Heart right ventricle (tissue), 16 donors: ENCODE measurements at regions of chr3 and their contacts with region 1.

Region 1: DNA sequence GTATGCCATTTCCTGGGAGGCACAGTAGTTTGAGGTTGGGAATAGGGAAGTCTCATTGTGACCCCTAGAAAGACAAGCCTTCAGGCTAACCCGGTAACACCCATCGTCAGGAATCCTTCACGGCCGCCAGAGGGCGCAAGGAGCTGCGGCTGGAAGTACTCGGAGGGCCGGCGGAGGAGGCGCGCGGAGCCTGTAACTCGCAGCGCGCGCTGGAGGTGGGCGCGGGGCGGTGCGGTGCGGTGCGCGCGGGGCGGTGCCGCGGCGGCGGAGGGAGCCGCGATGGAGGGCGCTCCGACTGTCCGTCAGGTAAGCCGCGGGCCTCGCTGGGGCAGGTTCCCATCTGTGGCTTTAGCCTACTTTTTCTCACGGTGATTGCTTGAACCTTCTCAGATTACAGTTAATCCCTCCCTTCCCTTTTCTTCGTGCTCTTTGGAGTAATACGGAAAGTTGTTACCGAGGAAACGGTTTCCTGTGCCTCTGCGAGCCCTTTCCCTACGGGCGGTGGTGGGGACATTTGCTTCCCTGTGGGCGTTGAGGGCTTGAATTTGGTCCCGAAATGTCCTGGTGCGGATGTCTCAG is at the start of gene GRAMD1C:
- DNase-seq: peak; percentile 82 to 86
- ATAC-seq: peak; percentile 91 to 99 (median 98)
- H3K4me3 ChIP-seq: peak within 1 kb of the TSS; percentile 14 to 79 (median 60)
- H3K27ac ChIP-seq: peak within 1 kb of the TSS in 6 of 10 donors; percentile 43 to 71 (median 58)
- H3K4me1 ChIP-seq: peaks cover 0 to 9% (median 2%) of the 10 kb centered on the region in 9 donors
- H3K27me3 ChIP-seq: no peaks in the 10 kb centered on the region
- CTCF ChIP-seq: peak; percentile 72 to 91 (median 84)
- total RNA-seq, gene GRAMD1C: 0.37 to 4.7 (median 1.2) TPM

Region 2: DNA sequence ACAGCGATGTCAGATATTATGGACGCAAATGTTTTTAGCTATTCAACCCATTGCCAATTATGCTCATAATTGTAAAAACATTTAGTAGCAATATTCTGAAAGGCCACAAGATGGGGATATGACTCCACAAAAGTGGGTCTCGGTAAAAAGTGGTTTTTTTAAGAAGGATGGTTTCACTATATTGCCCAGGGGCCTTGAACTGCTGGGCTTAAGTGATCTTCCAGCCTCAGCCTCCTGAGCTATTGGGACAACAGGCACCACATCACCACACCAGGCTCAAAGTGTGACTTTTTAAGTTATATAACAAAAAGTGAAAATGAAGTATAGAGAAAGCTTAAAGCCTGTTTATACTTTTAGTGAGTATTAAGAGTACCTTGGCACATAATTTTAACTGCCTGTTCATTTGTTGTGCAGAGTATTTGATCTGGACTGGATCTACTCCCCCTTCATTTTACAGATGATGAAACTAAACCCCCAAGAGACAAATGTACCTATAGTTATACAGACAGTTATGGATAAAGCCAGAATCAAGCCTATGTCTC is 102.1 kb before region 1 on chr3:
- intact Hi-C with region 1: loop called in 5 of 10 experiments (anchors 2 to 10 kb)
- DNase-seq: peak in 1 of 2 donors; percentile 26
- ATAC-seq: peak in 7 of 8 donors; percentile 55 to 83 (median 74)
- H3K4me3 ChIP-seq: no peak overlapping the region
- H3K27ac ChIP-seq: peak overlapping the region in 2 of 10 donors; percentile 0 to 6
- H3K4me1 ChIP-seq: peaks cover 0 to 43% (median 36%) of the 10 kb centered on the region in 9 donors
- H3K27me3 ChIP-seq: no peaks in the 10 kb centered on the region
- CTCF ChIP-seq: peak; percentile 52 to 80 (median 73)

Region 3: DNA sequence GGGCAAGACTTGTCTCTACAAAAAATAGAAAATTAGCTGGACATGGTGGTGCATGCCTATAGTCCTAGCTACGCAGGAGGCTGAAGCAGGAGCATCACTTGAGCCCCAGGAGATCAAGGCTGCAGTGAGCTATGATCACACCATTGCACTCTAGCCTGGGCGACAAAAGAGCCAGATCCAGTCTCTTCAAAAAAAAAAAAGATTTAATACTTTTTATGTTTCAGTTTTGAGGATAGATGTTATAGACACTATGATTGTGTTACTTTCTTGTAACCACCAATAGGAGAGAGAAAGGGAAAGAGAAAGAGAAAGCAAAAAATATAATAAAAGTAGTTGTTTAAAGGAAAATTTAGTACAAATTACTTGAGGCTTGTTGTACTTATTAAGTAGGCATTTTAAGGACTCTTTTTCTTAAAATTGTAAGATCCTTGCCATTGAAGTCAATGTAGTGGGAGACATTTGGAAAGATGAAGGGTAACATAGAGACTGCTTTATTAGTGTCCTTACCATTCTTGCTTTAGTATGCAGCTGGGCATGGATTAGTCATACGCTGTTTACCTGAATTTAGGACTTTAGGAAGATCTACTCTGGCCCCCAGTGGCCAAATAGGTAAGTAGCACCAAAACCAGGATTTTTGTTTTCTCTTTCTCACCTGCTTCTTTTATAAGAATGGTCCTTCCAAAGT is 74.0 kb after region 1 on chr3:
- intact Hi-C with region 1: loop called in 8 of 10 experiments (anchors 2 to 10 kb)
- DNase-seq: no peak
- ATAC-seq: peak in 1 of 8 donors; percentile 51
- H3K4me3 ChIP-seq: no peak overlapping the region
- H3K27ac ChIP-seq: no peak overlapping the region
- H3K4me1 ChIP-seq: no peaks in the 10 kb centered on the region
- H3K27me3 ChIP-seq: peaks cover 0 to 4% (median 0%) of the 10 kb centered on the region in 7 donors
- CTCF ChIP-seq: peak in 8 of 9 donors; percentile 6 to 55 (median 50)

Region 4: GRCh38 chr3:114194750-114195149 is 356.0 kb after region 1 on chr3:
- intact Hi-C with region 1: no loop called
- DNase-seq: no peak
- ATAC-seq: no peak
- H3K4me3 ChIP-seq: no peak overlapping the region
- H3K27ac ChIP-seq: no peak overlapping the region
- H3K4me1 ChIP-seq: no peaks in the 10 kb centered on the region
- H3K27me3 ChIP-seq: no peaks in the 10 kb centered on the region
- CTCF ChIP-seq: no peak

Region 5: DNA sequence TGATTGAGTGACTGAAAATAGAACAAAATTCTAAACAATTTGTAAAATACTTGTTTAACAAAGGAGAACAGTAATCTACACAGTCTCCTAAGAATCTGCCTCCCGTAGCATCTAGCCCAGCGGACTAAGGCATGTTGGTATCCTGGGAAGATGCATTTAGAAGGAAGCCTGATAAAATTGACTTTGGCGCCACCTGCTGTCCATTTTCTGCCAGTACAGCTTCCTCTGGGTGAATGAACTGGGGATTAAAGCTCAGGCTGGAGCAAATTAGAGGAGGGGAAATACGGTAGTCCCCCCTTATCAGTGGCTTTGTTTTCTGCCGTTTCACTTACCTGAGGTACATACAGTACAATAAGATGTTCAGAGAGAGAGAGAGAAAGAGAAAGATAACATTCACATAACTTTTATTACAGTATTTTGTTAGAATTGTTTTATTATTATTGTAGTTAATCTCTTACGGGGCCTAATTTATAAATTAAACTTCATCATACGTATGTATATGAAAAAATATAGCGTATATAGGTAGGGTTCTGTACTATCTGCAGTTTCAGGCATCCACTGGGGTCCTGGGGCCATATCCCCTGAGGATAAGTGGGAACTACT is 1976.2 kb after region 1 on chr3:
- intact Hi-C with region 1: loop called in 1 of 10 experiments (anchors 5 kb)
- DNase-seq: peak; percentile 52 to 68
- ATAC-seq: peak; percentile 47 to 84 (median 70)
- H3K4me3 ChIP-seq: no peak overlapping the region
- H3K27ac ChIP-seq: no peak overlapping the region
- H3K4me1 ChIP-seq: no peaks in the 10 kb centered on the region
- H3K27me3 ChIP-seq: peaks cover 0 to 9% (median 0%) of the 10 kb centered on the region in 7 donors
- CTCF ChIP-seq: peak; percentile 73 to 96 (median 90)